Endothelial cell of umbilical vein (primary cell): ENCODE measurements at regions of chr1 and their contacts with region 1.

Region 1: DNA sequence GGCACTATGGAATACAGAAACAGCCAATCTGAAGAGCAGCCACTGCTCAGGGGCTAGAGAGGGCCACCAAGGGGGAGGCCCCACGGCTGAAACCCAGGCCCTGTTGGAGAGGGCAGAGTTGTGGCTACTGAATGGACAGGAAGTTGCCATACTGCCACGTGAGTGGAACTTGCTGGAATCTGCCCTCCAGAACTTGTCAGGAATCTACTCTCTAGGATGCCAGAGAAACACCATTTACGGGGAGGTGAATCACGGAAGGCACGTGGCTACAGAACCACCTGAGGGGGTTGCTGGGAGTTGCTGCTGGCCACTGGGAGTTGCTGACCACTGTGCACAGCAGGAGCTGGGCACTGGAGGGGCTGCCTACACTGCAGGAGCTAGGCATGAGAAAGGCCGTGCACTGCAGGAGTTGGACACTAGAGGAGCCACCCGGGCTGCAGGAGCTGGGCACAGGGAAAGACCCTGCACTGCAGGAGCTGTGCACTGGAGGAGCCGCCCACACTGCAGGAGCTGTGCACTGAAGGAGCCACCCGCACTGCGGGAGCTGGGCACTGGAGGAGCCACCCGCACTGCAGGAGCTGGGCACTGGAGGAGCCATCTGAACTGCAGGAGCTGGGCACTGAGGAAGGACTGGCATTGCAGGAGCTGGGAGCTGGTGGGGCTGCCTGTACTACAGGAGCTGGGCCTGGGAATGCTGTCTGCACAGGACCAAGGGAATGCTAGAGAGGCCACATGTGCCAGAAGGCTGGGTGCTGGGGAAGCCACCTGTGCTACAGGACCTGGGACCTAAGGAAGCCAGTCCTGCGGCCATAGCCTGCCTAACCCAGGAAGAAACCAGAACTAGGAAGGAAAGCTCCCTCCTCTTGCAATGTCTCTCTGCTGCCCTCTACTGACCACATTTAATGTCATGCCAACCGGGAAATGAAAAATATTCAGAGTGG is 343.4 kb downstream of the MATN1 start:
- DNase-seq: peak; percentile 50
- H3K4me3 ChIP-seq: no peak overlapping the region
- H3K27ac ChIP-seq: no peak overlapping the region
- H3K4me1 ChIP-seq: no peaks in the 10 kb centered on the region
- H3K27me3 ChIP-seq: no peaks in the 10 kb centered on the region
- CTCF ChIP-seq: peak; percentile 73 to 76
- POLR2A ChIP-seq: no peak

Region 2: DNA sequence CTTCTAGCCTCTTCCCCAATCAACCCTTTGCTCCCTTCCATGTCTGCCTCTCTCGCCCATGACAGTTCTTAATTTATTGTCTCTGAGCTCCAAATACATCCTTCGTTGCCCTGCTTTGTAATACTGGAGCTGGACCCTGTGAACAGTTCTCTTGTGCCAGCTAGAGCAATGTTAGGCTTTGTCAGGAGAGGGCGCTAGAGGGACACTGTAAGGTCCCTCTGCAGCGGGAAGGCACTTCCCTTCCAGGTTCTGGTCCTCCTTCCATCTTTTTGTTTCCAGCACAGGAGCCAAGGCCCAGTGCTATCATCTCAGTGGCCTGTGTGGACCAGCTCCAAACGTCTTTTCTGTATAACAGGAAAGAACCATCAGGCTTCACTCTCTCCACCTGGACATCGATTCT is 1047.8 kb before region 1 on chr1:
- CTCF ChIA-PET with region 1: interaction called, 17 read pairs
- POLR2A ChIA-PET with region 1: no interaction called
- dilution Hi-C with region 1: no loop called
- intact Hi-C with region 1: no loop called
- DNase-seq: peak; percentile 22
- H3K4me3 ChIP-seq: no peak overlapping the region
- H3K27ac ChIP-seq: no peak overlapping the region
- H3K4me1 ChIP-seq: no peaks in the 10 kb centered on the region
- H3K27me3 ChIP-seq: peaks cover 2 to 5% of the 10 kb centered on the region in 2 experiments
- CTCF ChIP-seq: peak; percentile 27 to 51
- POLR2A ChIP-seq: no peak

Region 3: DNA sequence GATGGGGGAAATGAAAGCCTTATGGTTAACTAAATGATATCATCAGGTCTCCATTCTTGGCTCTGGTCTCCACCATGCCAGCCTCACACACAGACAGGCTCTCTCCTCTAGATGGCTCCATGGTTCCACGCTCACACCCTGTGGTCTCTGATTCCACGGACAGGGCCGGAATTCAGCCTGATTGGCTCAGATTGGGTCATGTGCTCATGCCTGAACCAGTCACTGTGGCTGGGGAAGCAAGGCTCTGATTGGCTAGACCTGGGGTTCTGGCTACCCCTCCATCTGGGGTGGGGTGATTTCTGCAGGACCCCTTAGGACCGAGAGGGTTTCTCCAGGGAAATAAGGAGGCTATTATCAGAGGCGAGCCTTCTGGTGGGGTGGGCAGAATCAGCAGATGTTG is 866.6 kb before region 1 on chr1:
- CTCF ChIA-PET with region 1: interaction called, 9 read pairs
- POLR2A ChIA-PET with region 1: no interaction called
- dilution Hi-C with region 1: no loop called
- intact Hi-C with region 1: loop called (anchors 2 kb)
- DNase-seq: peak; percentile 45
- H3K4me3 ChIP-seq: no peak overlapping the region
- H3K27ac ChIP-seq: no peak overlapping the region
- H3K4me1 ChIP-seq: no peaks in the 10 kb centered on the region
- H3K27me3 ChIP-seq: no peaks in the 10 kb centered on the region
- CTCF ChIP-seq: peak; percentile 50 to 51
- POLR2A ChIP-seq: no peak

Region 4: GRCh38 chr1:29708901-29709710 is 670.8 kb before region 1 on chr1:
- CTCF ChIA-PET with region 1: interaction called, 23 read pairs
- POLR2A ChIA-PET with region 1: no interaction called
- dilution Hi-C with region 1: no loop called
- intact Hi-C with region 1: no loop called
- DNase-seq: no peak
- H3K4me3 ChIP-seq: no peak overlapping the region
- H3K27ac ChIP-seq: peak overlapping the region; percentile 95
- H3K4me1 ChIP-seq: peaks cover 48% of the 10 kb centered on the region
- H3K27me3 ChIP-seq: peaks cover 10 to 12% of the 10 kb centered on the region in 2 experiments
- CTCF ChIP-seq: no peak
- POLR2A ChIP-seq: peak; percentile 60

Region 5: GRCh38 chr1:29912425-29912824 is 467.5 kb before region 1 on chr1:
- CTCF ChIA-PET with region 1: interaction called, 3 read pairs
- POLR2A ChIA-PET with region 1: no interaction called
- dilution Hi-C with region 1: no loop called
- intact Hi-C with region 1: loop called (anchors 5 kb)
- DNase-seq: peak; percentile 6
- H3K4me3 ChIP-seq: no peak overlapping the region
- H3K27ac ChIP-seq: no peak overlapping the region
- H3K4me1 ChIP-seq: no peaks in the 10 kb centered on the region
- H3K27me3 ChIP-seq: no peaks in the 10 kb centered on the region
- CTCF ChIP-seq: peak; percentile 8 to 13
- POLR2A ChIP-seq: no peak

Region 6: GRCh38 chr1:30362603-30362990 is 17.4 kb before region 1 on chr1:
- CTCF ChIA-PET with region 1: interaction called, 25 read pairs
- POLR2A ChIA-PET with region 1: no interaction called
- dilution Hi-C with region 1: no loop called
- intact Hi-C with region 1: no loop called
- DNase-seq: no peak
- H3K4me3 ChIP-seq: no peak overlapping the region
- H3K27ac ChIP-seq: no peak overlapping the region
- H3K4me1 ChIP-seq: no peaks in the 10 kb centered on the region
- H3K27me3 ChIP-seq: no peaks in the 10 kb centered on the region
- CTCF ChIP-seq: no peak
- POLR2A ChIP-seq: no peak

Region 7: GRCh38 chr1:30572192-30572591 is 192.2 kb after region 1 on chr1:
- CTCF ChIA-PET with region 1: no interaction called
- POLR2A ChIA-PET with region 1: no interaction called
- dilution Hi-C with region 1: no loop called
- intact Hi-C with region 1: no loop called
- DNase-seq: no peak
- H3K4me3 ChIP-seq: no peak overlapping the region
- H3K27ac ChIP-seq: no peak overlapping the region
- H3K4me1 ChIP-seq: no peaks in the 10 kb centered on the region
- H3K27me3 ChIP-seq: no peaks in the 10 kb centered on the region
- CTCF ChIP-seq: no peak
- POLR2A ChIP-seq: no peak